ENCODE measurements at regions of chr5 and their contacts with region 1.

Region 1: GRCh38 chr5:147453875-147454814 is 55.7 kb downstream of the DPYSL3 start:
- DNase-seq: peak; percentile 88 to 94
- H3K4me3 ChIP-seq: peak overlapping the region; percentile 92
- H3K4me3 Mint-ChIP-seq: peak overlapping the region; percentile 85
- H3K27ac Mint-ChIP-seq: peak overlapping the region; percentile 73
- H3K4me1 ChIP-seq: peaks cover 29% of the 10 kb centered on the region
- H3K4me1 Mint-ChIP-seq: peaks cover 23% of the 10 kb centered on the region
- H3K27me3 ChIP-seq: no peaks in the 10 kb centered on the region
- H3K27me3 Mint-ChIP-seq: no peaks in the 10 kb centered on the region
- CTCF ChIP-seq: peak; percentile 93 to 95

Region 2: GRCh38 chr5:146906803-146907202 is 547.3 kb before region 1 on chr5:
- CTCF ChIA-PET with region 1: no interaction called
- POLR2A ChIA-PET with region 1: no interaction called
- intact Hi-C with region 1: no loop called
- DNase-seq: peak; percentile 29 to 42
- H3K4me3 ChIP-seq: no peak overlapping the region
- H3K4me3 Mint-ChIP-seq: no peak overlapping the region
- H3K27ac Mint-ChIP-seq: no peak overlapping the region
- H3K4me1 ChIP-seq: no peaks in the 10 kb centered on the region
- H3K4me1 Mint-ChIP-seq: no peaks in the 10 kb centered on the region
- H3K27me3 ChIP-seq: no peaks in the 10 kb centered on the region
- H3K27me3 Mint-ChIP-seq: peaks cover 5% of the 10 kb centered on the region
- CTCF ChIP-seq: no peak

Region 3: DNA sequence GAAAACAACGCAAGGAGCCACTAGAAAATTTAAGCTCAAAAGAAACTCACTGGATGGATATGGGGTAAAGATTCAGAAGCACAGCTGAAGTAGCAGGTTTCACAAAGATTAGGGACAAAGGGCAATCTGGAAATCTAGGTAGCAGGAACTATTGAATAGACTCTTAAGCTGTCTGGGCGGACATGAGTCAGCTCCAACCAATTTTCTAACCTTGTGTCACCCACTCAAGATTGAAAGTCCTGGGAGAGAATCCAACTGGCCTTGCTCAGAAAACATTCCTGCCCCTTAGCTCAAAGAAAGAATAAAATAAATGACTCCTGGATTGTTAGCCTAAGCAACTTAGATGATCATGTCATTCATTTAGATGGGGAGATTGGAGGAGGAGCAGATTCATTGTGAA is 150.2 kb before region 1 on chr5:
- CTCF ChIA-PET with region 1: no interaction called
- POLR2A ChIA-PET with region 1: no interaction called
- intact Hi-C with region 1: no loop called
- DNase-seq: no peak
- H3K4me3 ChIP-seq: no peak overlapping the region
- H3K4me3 Mint-ChIP-seq: no peak overlapping the region
- H3K27ac Mint-ChIP-seq: no peak overlapping the region
- H3K4me1 ChIP-seq: no peaks in the 10 kb centered on the region
- H3K4me1 Mint-ChIP-seq: no peaks in the 10 kb centered on the region
- H3K27me3 ChIP-seq: no peaks in the 10 kb centered on the region
- H3K27me3 Mint-ChIP-seq: no peaks in the 10 kb centered on the region
- CTCF ChIP-seq: no peak

Region 4: GRCh38 chr5:147403651-147404640 is 50.2 kb before region 1 on chr5:
- CTCF ChIA-PET with region 1: interaction called, 4 read pairs
- POLR2A ChIA-PET with region 1: no interaction called
- intact Hi-C with region 1: loop called (anchors 1 kb)
- DNase-seq: no peak
- H3K4me3 ChIP-seq: no peak overlapping the region
- H3K4me3 Mint-ChIP-seq: no peak overlapping the region
- H3K27ac Mint-ChIP-seq: peak overlapping the region; percentile 74
- H3K4me1 ChIP-seq: peaks cover 83% of the 10 kb centered on the region
- H3K4me1 Mint-ChIP-seq: peaks cover 43% of the 10 kb centered on the region
- H3K27me3 ChIP-seq: no peaks in the 10 kb centered on the region
- H3K27me3 Mint-ChIP-seq: no peaks in the 10 kb centered on the region
- CTCF ChIP-seq: no peak

Region 5: DNA sequence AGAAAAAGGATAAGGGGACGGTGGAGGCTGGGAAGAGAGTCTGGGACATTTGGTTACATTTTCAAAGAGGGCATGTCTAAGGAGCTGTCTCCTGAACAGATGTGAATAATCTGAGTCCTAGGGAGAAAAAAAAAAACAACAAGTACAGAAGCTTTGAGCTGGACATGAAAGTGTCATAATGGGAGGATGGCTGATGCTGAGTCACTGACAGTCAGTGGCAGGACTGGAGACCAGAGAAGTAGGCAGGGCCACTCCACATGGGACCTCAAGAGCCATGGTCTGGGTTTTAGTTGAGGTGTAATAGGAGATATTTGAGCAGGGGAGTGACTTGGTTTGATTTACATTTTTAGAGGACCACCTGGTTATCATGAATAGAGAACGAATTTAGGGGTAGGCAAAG is 14.9 kb before region 1 on chr5:
- CTCF ChIA-PET with region 1: no interaction called
- POLR2A ChIA-PET with region 1: no interaction called
- intact Hi-C with region 1: no loop called
- DNase-seq: no peak
- H3K4me3 ChIP-seq: no peak overlapping the region
- H3K4me3 Mint-ChIP-seq: no peak overlapping the region
- H3K27ac Mint-ChIP-seq: no peak overlapping the region
- H3K4me1 ChIP-seq: peaks cover 18% of the 10 kb centered on the region
- H3K4me1 Mint-ChIP-seq: peaks cover 47% of the 10 kb centered on the region
- H3K27me3 ChIP-seq: no peaks in the 10 kb centered on the region
- H3K27me3 Mint-ChIP-seq: no peaks in the 10 kb centered on the region
- CTCF ChIP-seq: no peak